ENCODE measurements at regions of chr20 and their contacts with region 1.

Region 1: DNA sequence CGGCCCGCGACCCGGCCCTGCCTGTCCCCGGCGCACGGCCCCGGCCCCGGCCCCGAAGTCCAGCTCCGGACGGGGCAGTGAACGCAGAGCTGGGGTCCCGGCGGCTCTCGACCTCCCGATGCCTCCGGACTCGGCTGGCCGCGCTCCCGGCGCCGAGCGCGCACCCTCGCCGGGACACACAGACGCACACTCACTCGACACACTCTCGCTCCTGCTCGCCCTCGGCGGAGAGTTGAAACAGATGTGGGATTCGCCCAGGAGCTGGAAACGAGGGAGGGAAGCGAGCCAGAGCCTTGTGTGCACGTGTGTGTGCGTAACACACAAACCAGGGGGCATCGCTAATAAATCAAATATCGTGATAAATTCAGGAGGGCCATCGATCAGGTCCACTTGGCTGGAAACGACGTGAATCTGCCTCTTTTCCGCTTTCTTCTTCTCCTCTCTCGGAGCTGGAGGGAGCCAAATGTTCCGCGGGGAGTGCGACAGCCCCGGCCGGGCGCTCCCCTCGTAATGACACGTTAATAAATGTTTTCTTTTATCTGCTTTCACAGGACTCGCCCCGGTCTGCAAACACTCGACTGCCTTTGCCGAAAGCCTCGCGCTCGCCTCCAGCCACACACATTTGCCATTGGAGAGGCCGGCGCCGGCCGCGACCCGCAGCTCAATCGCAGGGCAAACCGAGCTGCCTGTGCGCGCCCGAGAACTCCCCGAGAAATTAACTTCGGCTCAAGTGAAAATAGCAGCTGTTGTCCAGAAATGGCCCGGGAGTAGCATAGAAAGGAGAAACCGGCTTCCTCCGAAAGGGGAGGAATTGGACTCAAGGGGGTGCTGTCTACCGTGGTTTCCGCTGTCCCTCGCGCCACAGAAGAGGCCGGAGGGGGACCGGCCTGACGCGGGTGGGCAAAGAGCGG is 828 bp upstream of the SULF2 start:
- DNase-seq: peak; percentile 93
- H3K4me3 ChIP-seq: peak overlapping the region; percentile 75 to 84 (median 78)
- H3K27ac ChIP-seq: peak overlapping the region; percentile 90 to 95 (median 94)
- H3K4me1 ChIP-seq: peaks cover 19 to 81% (median 66%) of the 10 kb centered on the region in 4 donors
- H3K27me3 ChIP-seq: no peaks in the 10 kb centered on the region
- CTCF ChIP-seq: peak; percentile 77 to 85 (median 77)
- EP300 ChIP-seq: no peak
- POLR2A ChIP-seq: no peak

Region 2: DNA sequence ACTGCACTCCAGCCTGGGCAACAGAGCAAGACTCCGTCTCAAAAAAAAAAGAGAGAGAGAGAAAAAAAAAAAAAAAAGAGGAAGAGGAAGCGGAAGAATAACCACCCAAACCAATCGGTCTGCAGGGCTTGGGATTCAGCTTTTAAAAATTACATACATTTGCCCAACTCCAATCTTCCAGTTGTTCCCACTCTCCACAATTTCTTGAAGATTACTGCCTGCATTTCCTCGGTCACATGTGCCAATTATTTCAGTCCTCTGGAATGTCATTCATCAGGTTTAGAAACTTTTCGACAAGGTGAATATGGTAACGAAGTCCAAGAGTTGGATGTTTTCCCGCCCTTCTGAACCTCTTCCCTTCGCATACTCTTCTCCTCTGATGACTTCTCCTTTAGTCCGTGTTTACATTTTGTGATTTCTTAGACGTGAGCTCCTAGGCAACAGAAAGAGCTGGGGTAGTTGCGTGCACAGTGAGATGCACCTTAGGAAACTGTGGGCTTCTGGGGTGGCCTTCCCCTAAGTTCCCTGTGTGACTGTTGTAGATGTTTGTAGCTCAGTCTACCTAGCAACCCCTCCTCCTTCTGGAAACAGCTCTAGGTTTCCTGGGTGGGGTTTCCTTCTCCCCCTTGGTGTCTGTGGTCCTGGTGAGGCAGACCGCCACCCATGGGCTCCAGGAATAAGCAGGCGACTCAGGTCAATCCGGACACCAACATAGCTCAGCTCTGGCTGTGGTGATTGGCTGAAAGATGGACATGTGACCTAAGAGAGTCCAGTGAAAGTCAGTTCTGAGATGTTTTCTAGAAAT is 347.3 kb before region 1 on chr20:
- intact Hi-C with region 1: no loop called
- DNase-seq: no peak
- H3K4me3 ChIP-seq: no peak overlapping the region
- H3K27ac ChIP-seq: peak overlapping the region in 1 of 4 donors; percentile 1
- H3K4me1 ChIP-seq: no peaks in the 10 kb centered on the region
- H3K27me3 ChIP-seq: no peaks in the 10 kb centered on the region
- CTCF ChIP-seq: no peak
- EP300 ChIP-seq: no peak
- POLR2A ChIP-seq: no peak

Region 3: GRCh38 chr20:47677635-47678453 is 108.3 kb before region 1 on chr20:
- intact Hi-C with region 1: loop called (anchors 5 kb)
- DNase-seq: no peak
- H3K4me3 ChIP-seq: no peak overlapping the region
- H3K27ac ChIP-seq: no peak overlapping the region
- H3K4me1 ChIP-seq: peaks cover 17 to 34% (median 23%) of the 10 kb centered on the region in 4 donors
- H3K27me3 ChIP-seq: no peaks in the 10 kb centered on the region
- CTCF ChIP-seq: peak; percentile 71 to 85 (median 81)
- EP300 ChIP-seq: no peak
- POLR2A ChIP-seq: no peak

Region 4: GRCh38 chr20:47725248-47725973 is 60.7 kb before region 1 on chr20:
- intact Hi-C with region 1: loop called (anchors 5 kb)
- DNase-seq: peak; percentile 95
- H3K4me3 ChIP-seq: no peak overlapping the region
- H3K27ac ChIP-seq: no peak overlapping the region
- H3K4me1 ChIP-seq: peaks cover 4 to 39% (median 36%) of the 10 kb centered on the region in 4 donors
- H3K27me3 ChIP-seq: no peaks in the 10 kb centered on the region
- CTCF ChIP-seq: peak; percentile 89 to 94 (median 92)
- EP300 ChIP-seq: no peak
- POLR2A ChIP-seq: no peak

Region 5: DNA sequence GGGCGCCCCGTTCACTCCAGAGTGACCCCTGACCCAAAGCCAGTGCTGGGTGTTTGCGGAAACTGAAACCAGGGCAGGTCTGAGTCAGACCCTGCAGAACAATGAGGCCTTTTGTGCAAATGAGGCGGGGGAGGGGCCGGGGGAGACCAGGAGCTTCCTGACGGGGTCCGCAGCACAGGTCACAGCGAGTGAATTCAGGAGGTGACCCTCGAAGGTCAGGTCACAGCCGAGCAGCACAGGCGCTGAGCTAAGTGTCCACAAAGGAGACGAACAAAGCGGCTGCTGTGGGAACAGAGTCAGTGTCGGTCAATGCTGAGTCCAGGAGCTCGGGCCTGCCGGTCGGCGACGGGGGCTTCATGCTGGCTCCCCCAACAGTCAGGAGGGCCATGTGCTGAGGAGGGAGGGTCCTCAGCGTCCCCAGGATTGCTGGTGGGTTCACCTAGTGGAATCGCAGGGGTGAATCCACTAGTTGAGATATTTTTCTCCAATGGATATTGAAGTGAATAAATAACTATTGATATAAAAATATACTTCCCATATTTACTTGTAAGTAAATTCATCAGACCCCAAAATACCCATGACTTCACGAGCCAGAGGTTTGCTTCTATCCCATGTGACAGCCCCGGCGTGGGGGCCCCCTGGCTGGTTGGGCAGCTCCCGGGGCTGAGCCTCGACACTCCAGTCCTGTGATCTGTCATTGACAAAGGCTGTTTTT is 187.6 kb after region 1 on chr20:
- intact Hi-C with region 1: loop called (anchors 10 kb)
- DNase-seq: no peak
- H3K4me3 ChIP-seq: no peak overlapping the region
- H3K27ac ChIP-seq: peak overlapping the region; percentile 28 to 60 (median 52)
- H3K4me1 ChIP-seq: peaks cover 19 to 30% (median 26%) of the 10 kb centered on the region in 4 donors
- H3K27me3 ChIP-seq: no peaks in the 10 kb centered on the region
- CTCF ChIP-seq: no peak
- EP300 ChIP-seq: no peak
- POLR2A ChIP-seq: no peak

Region 6: GRCh38 chr20:48188657-48189551 is 402.8 kb after region 1 on chr20:
- intact Hi-C with region 1: loop called (anchors 10 kb)
- DNase-seq: no peak
- H3K4me3 ChIP-seq: no peak overlapping the region
- H3K27ac ChIP-seq: peak overlapping the region in 2 of 4 donors; percentile 9 to 39
- H3K4me1 ChIP-seq: peaks cover 3 to 49% (median 45%) of the 10 kb centered on the region in 4 donors
- H3K27me3 ChIP-seq: no peaks in the 10 kb centered on the region
- CTCF ChIP-seq: peak; percentile 26 to 45 (median 33)
- EP300 ChIP-seq: no peak
- POLR2A ChIP-seq: no peak

Region 7: GRCh38 chr20:48295445-48295963 is 509.4 kb after region 1 on chr20:
- intact Hi-C with region 1: loop called (anchors 2 kb)
- DNase-seq: no peak
- H3K4me3 ChIP-seq: no peak overlapping the region
- H3K27ac ChIP-seq: peak overlapping the region; percentile 68 to 77 (median 76)
- H3K4me1 ChIP-seq: peaks cover 28 to 47% (median 39%) of the 10 kb centered on the region in 4 donors
- H3K27me3 ChIP-seq: no peaks in the 10 kb centered on the region
- CTCF ChIP-seq: peak; percentile 35 to 62 (median 48)
- EP300 ChIP-seq: no peak
- POLR2A ChIP-seq: no peak